AG04449 (cell line): ENCODE measurements at regions of chr10 and their contacts with region 1.

Region 1: GRCh38 chr10:62816331-62817120 is at the start of gene EGR2:
- DNase-seq: peak; percentile 61
- H3K4me3 ChIP-seq: peak within 1 kb of the TSS; percentile 65
- CTCF ChIP-seq: no peak

Region 2: DNA sequence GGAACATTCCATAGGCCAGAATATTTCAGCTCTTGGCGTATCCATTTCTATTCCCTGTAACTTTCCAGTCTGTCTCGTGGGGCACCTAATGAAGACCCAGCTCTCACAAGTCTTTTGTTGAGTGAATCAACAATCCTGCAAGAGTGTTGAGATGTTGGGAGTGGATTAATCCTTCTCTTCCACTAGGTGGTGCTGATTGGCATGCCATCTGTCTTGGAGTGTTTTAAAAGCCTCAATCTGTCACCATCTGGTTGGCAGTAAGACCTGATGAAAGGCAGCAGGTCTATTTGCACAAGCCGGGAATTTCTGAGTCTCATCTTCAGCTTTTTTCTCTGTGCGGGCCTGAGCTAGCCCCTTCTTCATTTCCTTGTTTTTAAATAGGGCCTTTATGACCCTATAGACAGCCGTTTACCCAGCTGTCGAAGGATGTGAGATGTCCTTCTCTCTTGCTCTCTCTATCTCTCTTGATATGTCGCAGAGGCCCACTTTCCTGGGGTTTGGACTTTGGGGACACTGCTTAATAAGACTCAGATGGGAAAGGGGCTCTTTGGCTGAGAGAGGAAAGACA is 261.8 kb before region 1 on chr10:
- CTCF ChIA-PET with region 1: interaction called, 17 read pairs
- POLR2A ChIA-PET with region 1: no interaction called
- DNase-seq: peak; percentile 34
- H3K4me3 ChIP-seq: no peak overlapping the region
- CTCF ChIP-seq: peak; percentile 57

Region 3: GRCh38 chr10:62594093-62594520 is 222.4 kb before region 1 on chr10:
- CTCF ChIA-PET with region 1: interaction called, 35 read pairs
- POLR2A ChIA-PET with region 1: interaction called, 4 read pairs
- DNase-seq: no peak
- H3K4me3 ChIP-seq: no peak overlapping the region
- CTCF ChIP-seq: peak; percentile 93

Region 4: GRCh38 chr10:62618576-62619412 is 197.7 kb before region 1 on chr10:
- CTCF ChIA-PET with region 1: interaction called, 79 read pairs
- POLR2A ChIA-PET with region 1: no interaction called
- DNase-seq: peak; percentile 45
- H3K4me3 ChIP-seq: no peak overlapping the region
- CTCF ChIP-seq: no peak

Region 5: DNA sequence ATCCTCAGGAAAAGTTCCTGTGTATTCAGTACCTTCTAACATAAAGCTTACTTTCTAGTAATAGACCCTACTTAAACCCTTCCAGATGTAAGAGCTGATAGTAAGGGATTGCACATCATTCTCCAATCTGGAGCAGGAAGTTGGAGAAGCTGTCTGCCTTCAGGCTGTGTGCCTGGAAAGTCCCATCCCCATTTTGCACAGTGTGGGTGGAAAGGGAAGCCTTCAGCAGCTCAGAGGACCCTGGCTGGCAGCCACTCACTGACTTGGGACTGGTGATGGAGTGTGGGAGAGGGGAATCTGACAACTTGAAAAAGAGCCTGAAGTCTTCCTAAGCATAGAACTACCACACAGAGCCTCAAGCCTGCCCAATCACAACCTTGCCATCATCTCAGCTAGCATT is 176.1 kb before region 1 on chr10:
- CTCF ChIA-PET with region 1: no interaction called
- POLR2A ChIA-PET with region 1: no interaction called
- DNase-seq: no peak
- H3K4me3 ChIP-seq: no peak overlapping the region
- CTCF ChIP-seq: no peak

Region 6: GRCh38 chr10:62831346-62831745 is 14.8 kb after region 1 on chr10:
- CTCF ChIA-PET with region 1: interaction called, 19 read pairs
- POLR2A ChIA-PET with region 1: interaction called, 3 read pairs
- DNase-seq: peak; percentile 42
- H3K4me3 ChIP-seq: no peak overlapping the region
- CTCF ChIP-seq: no peak